Left cardiac atrium (tissue), 4 donors: ENCODE measurements at regions of chr3 and their contacts with region 1.

Region 1: DNA sequence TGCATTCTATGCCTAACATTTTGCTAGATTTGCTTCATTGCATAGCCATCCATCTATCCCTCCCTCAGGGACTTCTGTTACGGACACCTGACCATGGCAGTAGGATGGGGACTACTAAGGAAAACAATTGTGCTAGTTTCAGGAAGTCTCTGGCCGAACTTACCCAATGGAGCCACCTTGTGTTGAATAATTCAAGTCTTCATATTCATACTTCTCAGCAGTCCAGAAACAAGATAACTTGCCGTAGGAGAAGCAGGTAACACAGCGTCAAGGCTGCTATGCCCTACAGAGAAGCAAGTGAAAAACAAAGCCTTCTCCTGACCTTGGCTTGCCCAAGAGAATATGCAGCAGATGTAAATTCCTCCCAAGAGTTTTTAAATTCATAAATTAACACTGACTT is 685.3 kb downstream of the GRM7 start:
- DNase-seq: no peak
- ATAC-seq: peak; percentile 49 to 70

Region 2: DNA sequence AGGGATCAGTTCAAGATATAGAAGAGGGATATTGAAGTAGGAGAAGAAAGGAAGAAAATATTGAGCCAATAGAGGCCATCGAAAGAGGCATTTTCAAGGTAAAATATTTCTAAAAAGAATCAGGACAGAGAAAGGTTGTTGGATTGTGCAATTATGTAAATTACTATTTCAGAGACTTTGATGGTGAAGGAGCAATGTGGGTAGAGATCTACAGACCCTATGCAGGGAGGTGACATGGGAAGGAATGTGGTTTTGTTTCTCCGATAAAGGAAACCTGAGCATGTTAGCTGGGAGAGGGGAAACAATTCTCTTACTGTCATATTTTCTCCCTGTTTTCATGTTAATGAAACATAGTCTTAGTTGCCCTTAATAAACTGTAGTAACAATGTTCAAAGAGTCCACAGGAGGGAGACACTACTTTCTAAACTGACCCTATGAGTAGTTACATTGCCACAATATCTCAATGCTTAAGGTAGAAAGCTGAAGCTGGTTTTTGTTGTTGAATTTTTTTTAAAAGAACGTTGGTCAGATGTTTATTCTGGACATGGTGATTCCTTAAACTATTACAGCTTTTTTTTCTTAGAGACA is 552.1 kb before region 1 on chr3:
- intact Hi-C with region 1: loop called in 1 of 2 experiments (anchors 10 kb)
- DNase-seq: no peak
- ATAC-seq: no peak

Region 3: GRCh38 chr3:7166460-7166859 is 379.8 kb before region 1 on chr3:
- intact Hi-C with region 1: loop called in 1 of 2 experiments (anchors 10 kb)
- DNase-seq: peak; percentile 43
- ATAC-seq: peak; percentile 99

Region 4: GRCh38 chr3:7285505-7285904 is 260.7 kb before region 1 on chr3:
- intact Hi-C with region 1: loop called (anchors 5 to 10 kb)
- DNase-seq: no peak
- ATAC-seq: peak in 1 of 2 donors; percentile 43

Region 5: DNA sequence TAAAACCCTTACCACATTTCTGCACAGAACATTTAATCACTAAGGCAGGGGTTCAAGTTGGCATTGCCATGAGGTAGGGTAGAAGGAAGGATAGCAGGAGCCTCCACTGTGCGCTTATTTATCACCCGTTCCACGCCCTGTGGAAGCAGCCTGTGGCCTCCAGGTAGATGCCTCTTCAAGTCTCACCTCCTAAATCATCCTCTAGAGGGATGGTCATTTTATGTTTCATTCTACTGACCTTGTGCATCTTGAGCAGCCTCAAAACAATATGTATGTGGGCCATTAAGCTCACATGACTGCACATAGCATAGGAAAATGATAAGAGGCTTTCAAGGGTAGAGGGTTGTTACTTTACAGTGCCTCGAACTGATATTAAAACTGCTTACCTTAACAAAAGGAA is 139.1 kb before region 1 on chr3:
- intact Hi-C with region 1: no loop called
- DNase-seq: no peak
- ATAC-seq: no peak

Region 6: DNA sequence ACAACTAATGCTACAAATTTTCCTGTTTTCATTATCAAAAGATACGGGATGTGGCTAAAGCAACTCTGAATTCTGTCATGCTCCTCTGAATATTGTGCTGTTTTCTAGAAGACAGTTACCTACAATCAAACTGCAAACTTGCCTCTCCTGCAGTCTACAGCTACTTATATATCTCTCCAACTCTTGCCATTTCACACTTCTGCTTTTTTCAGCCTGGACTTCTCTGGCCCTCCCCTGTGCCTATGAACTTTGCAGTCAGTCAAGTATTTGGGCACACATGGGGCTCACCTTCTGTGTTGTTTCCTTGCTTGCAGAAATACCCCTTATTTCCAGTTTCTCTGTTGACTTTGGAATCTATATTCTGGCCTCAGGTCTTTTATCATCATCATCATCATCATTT is 109.7 kb before region 1 on chr3:
- intact Hi-C with region 1: no loop called
- DNase-seq: no peak
- ATAC-seq: no peak

Region 7: GRCh38 chr3:7503431-7503830 is 42.8 kb before region 1 on chr3:
- intact Hi-C with region 1: no loop called
- DNase-seq: no peak
- ATAC-seq: no peak